Testis (tissue), 5 donors: ENCODE measurements at regions of chr16 and their contacts with region 1.

Region 1: DNA sequence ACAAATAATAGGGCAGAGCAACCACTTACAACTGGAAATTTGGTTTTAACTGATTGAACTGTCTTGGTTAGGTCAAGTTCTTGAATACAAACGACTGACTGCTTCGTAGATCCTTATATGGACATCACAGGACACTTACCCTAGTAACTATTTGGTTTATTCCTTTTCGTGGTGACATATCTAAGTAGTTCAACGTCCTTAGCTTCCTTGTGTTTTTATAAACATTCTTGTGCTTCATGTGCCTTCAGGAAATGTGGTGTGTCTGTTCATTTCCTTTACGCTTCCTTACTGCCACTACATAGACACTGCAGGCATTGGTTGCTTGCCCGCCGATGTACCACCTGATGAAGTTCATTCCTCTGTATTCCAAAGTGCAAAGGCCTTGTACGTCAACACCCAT is 59.3 kb downstream of the USP10 start:
- DNase-seq: no peak
- H3K4me3 ChIP-seq: no peak overlapping the region
- H3K27ac ChIP-seq: no peak overlapping the region
- H3K4me1 ChIP-seq: peaks cover 14% of the 10 kb centered on the region
- H3K27me3 ChIP-seq: no peaks in the 10 kb centered on the region
- CTCF ChIP-seq: no peak
- POLR2A ChIP-seq: no peak

Region 2: GRCh38 chr16:84970447-84971127 is 211.5 kb after region 1 on chr16:
- intact Hi-C with region 1: loop called (anchors 5 kb)
- DNase-seq: peak; percentile 86
- H3K4me3 ChIP-seq: no peak overlapping the region
- H3K27ac ChIP-seq: no peak overlapping the region
- H3K4me1 ChIP-seq: peaks cover 8% of the 10 kb centered on the region
- H3K27me3 ChIP-seq: no peaks in the 10 kb centered on the region
- CTCF ChIP-seq: peak; percentile 97 to 99 (median 98)
- POLR2A ChIP-seq: no peak